ENCODE measurements at regions of chr11 and their contacts with region 1.

Region 1: GRCh38 chr11:75867775-75868374 is 52.9 kb downstream of the UVRAG start:
- DNase-seq: peak; percentile 38 to 57 (median 46)
- ATAC-seq: peak; percentile 64
- H3K4me3 ChIP-seq: no peak overlapping the region
- H3K27ac ChIP-seq: no peak overlapping the region
- H3K4me1 ChIP-seq: peaks cover 32% of the 10 kb centered on the region
- H3K27me3 ChIP-seq: no peaks in the 10 kb centered on the region
- CTCF ChIP-seq: peak; percentile 38 to 95 (median 80)
- POLR2A ChIP-seq: no peak

Region 2: GRCh38 chr11:75802913-75803820 is 64.7 kb before region 1 on chr11:
- intact Hi-C with region 1: loop called (anchors 10 kb)
- DNase-seq: peak; percentile 77 to 85 (median 80)
- ATAC-seq: peak; percentile 92
- H3K4me3 ChIP-seq: no peak overlapping the region
- H3K27ac ChIP-seq: no peak overlapping the region
- H3K4me1 ChIP-seq: no peaks in the 10 kb centered on the region
- H3K27me3 ChIP-seq: no peaks in the 10 kb centered on the region
- CTCF ChIP-seq: peak; percentile 65 to 86 (median 85)
- POLR2A ChIP-seq: no peak

Measured in body of pancreas (tissue), 4 donors.